ENCODE measurements at regions of chr1 and their contacts with region 1.

Region 1: GRCh38 chr1:26695356-26696118 is at the start of gene ARID1A:
- DNase-seq: peak; percentile 97
- ATAC-seq: peak; percentile 68
- H3K4me3 ChIP-seq: peak within 1 kb of the TSS; percentile 89
- H3K27ac ChIP-seq: peak within 1 kb of the TSS; percentile 95
- H3K4me1 ChIP-seq: peaks cover 15% of the 10 kb centered on the region
- H3K27me3 ChIP-seq: no peaks in the 10 kb centered on the region
- CTCF ChIP-seq: 0 out of 2 replicates have a peak, but pooled peaks have one; percentile 12
- POLR2A ChIP-seq: peak; percentile 74
- RAD21 ChIP-seq: peak; percentile 50
- total RNA-seq, gene ARID1A: 14.0 and 16.7 TPM in 2 replicates

Region 2: DNA sequence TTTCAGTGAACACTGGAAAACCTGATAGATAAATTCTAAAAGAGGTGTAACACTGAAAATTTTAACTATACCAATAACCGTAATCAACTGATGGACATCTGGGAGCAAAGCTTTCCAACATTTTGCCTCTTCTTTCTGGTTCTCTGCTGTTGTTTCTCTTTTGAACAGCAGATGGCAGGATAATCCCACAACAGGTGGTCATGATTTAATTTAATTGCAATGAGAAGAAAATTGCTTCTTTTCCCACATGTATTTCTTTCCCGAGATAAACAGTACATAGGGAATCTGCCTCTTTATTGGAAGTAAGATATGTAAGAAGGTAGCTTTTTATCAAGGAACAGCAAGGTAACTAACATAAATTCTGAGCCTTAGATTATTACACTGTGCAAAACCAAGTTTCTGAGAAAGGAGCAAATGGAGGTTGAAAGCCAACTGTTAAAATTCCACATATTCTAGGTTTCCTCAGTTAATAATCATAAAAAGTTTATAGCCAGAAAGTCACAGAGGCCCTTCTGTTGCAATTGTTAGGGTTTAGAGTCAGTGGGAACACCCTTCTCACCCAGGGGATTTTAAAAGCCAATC is 93.1 kb before region 1 on chr1:
- CTCF ChIA-PET with region 1: interaction called, 3 read pairs
- POLR2A ChIA-PET with region 1: no interaction called
- dilution Hi-C with region 1: no loop called
- in situ Hi-C with region 1: no loop called
- intact Hi-C with region 1: loop called (anchors 5 kb)
- DNase-seq: peak; percentile 68
- ATAC-seq: peak; percentile 72
- H3K4me3 ChIP-seq: no peak overlapping the region
- H3K27ac ChIP-seq: no peak overlapping the region
- H3K4me1 ChIP-seq: no peaks in the 10 kb centered on the region
- H3K27me3 ChIP-seq: peaks cover 23% of the 10 kb centered on the region
- CTCF ChIP-seq: peak; percentile 95
- POLR2A ChIP-seq: no peak
- RAD21 ChIP-seq: peak; percentile 97

Region 3: DNA sequence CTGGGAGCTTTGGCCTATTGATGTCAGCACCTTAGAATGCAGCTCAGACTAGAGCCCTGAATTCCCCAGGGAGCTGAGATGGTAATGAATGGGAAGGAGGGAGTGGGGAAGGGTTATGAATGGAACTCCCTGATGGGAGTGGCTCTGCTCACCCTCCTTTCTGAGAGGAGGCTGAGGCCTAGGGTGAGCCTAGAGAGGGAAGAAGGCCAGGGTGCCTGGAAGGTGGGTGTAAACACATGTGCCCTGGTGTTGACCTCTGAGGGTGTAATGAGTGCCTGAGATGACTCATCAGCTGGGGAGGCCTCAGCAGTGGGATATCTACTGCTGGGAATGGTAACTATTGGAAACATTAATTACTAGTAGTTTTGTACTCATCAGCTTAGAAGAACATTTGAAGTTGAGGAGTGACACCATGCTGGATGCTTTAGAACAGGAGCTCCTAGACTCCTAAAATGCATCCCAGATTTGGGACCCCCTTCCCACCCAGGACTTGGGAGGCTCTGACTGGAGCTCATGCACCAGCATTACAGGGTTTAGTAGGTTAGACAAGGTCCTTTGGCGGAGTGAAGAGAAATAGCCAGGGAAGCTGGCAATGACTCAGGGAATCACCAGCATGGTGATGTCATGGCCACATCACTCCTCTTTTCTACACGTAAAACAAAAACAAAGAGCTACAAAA is 76.2 kb after region 1 on chr1:
- CTCF ChIA-PET with region 1: interaction called, 3 read pairs
- POLR2A ChIA-PET with region 1: interaction called, 3 read pairs
- dilution Hi-C with region 1: no loop called
- in situ Hi-C with region 1: no loop called
- intact Hi-C with region 1: loop called (anchors 1 kb)
- DNase-seq: peak; percentile 99
- ATAC-seq: peak; percentile 83
- H3K4me3 ChIP-seq: no peak overlapping the region
- H3K27ac ChIP-seq: peak overlapping the region; percentile 96
- H3K4me1 ChIP-seq: peaks cover 37% of the 10 kb centered on the region
- H3K27me3 ChIP-seq: no peaks in the 10 kb centered on the region
- CTCF ChIP-seq: no peak
- POLR2A ChIP-seq: peak; percentile 60; the same call in 1 of the 2 replicates
- RAD21 ChIP-seq: peak; percentile 7; the same call in 1 of the 2 replicates

Region 4: DNA sequence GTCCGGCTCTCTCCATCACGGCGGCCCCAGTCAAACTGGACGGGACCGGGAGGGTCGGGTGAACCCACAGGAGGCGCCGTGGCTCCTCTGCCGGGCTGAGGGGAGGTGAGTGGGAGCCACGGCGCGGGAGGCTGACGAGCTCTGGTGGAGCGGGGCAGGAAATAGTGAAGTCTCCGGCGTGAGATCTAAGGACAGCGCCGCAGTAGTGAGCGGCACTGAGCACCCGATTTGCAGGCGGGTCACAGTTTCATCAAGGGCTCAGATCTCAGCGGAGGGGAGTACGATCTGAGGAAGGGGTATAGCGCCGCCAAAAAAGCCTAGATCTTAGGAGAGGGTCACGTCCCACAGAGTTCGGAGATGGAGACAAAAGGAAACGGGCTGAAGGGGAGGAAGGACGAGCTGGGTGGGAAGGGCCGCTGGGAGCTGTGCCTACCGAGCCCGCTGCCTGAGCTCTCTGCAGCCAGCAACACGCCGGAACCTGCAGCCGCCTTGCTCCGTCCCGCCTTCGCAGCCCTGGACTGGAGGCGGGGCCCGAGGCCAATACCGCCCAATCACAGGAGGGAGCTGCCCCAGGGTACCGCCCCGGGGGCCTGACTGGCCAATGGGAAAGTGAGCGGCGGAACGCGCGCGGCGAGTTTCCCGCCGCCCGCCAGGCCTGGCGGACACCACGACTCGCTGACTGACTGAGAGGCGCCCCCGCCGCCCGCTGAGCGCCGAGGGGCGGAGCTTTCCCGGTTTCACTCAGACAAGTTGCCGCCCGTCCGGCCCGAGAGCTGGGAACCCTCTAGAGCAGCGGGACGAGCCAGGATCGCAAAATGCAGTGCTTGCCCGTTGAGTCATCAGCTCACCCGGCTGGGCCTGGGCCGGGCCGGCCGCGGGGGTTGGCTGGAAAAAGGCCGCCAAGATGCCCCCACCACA is 169.3 kb after region 1 on chr1:
- CTCF ChIA-PET with region 1: no interaction called
- POLR2A ChIA-PET with region 1: no interaction called
- dilution Hi-C with region 1: no loop called
- in situ Hi-C with region 1: no loop called
- intact Hi-C with region 1: loop called (anchors 10 kb)
- DNase-seq: peak; percentile 97
- ATAC-seq: peak; percentile 96
- H3K4me3 ChIP-seq: peak overlapping the region; percentile 62
- H3K27ac ChIP-seq: peak overlapping the region; percentile 100
- H3K4me1 ChIP-seq: peaks cover 4% of the 10 kb centered on the region
- H3K27me3 ChIP-seq: no peaks in the 10 kb centered on the region
- CTCF ChIP-seq: no peak
- POLR2A ChIP-seq: peak; percentile 78
- RAD21 ChIP-seq: no peak